Activated CD4-positive, alpha-beta memory T cell treated with anti-CD3 and anti-CD28 coated beads, Interleukin-2, amount 10 ng/mL, durations not matched to agents 7 days and 5 days (primary cell): ENCODE measurements at regions of chr9 and their contacts with region 1.

Region 1: GRCh38 chr9:111525056-111525977 is at the start of gene ZNF483:
- DNase-seq: peak; percentile 68
- H3K4me3 Mint-ChIP-seq: peak within 1 kb of the TSS; percentile 88
- H3K27ac Mint-ChIP-seq: peak within 1 kb of the TSS; percentile 73
- H3K4me1 Mint-ChIP-seq: peaks cover 30% of the 10 kb centered on the region
- H3K27me3 Mint-ChIP-seq: peaks cover 3% of the 10 kb centered on the region
- total RNA-seq, gene ZNF483: 5.9 to 6.0 TPM

Region 2: DNA sequence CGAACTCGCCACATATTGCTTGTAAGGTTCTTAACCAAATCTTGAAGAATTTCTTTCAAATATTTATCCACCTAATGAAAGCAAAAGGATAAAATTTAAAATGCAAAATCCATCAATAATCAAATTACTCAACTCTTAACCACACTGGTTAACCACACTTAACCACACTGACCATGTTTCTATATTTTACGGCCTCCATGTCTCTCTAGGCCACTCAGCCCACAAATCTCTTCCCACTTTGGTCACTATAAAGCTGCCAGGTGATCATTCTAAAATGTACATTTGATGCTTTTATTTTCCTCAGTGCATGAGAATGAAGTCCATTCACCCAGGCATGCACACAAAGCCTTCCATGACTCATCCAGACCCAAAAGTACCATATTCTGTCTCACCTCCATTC is 138.9 kb before region 1 on chr9:
- CTCF ChIA-PET with region 1: no interaction called
- POLR2A ChIA-PET with region 1: no interaction called
- DNase-seq: no peak
- H3K4me3 Mint-ChIP-seq: no peak overlapping the region
- H3K27ac Mint-ChIP-seq: no peak overlapping the region
- H3K4me1 Mint-ChIP-seq: no peaks in the 10 kb centered on the region
- H3K27me3 Mint-ChIP-seq: no peaks in the 10 kb centered on the region

Region 3: DNA sequence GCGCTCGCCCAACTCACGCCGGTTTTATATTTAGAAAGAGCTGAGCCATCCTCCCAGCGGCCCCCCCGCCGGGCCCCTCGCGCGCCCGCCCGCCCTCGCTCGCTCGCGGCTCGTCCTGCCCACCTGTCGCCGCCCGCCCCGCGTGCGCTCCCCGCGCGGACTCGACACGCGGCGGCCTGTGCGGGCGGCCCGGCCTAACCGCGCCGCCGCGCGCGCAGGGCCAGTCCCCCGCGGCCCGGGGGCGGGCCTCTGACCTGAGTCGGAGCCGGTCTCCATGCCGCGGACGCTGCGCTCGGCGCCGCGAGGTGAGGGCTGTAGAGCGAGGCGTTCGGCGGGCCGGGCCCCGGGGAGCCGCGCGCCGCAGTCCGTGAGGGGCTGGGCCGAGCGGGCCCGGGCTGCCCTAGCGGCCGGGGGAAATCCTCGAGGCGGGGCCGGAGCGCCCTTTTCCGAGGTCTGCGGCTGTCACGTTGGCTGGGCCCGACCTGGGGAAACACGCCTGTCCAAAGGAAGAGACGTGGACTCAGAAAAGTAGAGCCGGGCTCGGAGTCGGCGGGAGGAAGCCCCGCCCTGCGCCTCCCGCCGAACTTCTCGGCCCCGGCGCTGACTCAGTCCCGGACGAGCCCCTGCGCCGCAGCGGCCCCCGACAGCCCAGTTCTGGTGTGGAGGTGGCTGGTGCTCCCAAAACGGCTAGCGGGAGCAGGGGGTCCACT is 41.3 kb before region 1 on chr9 and contains the start of gene ECPAS:
- CTCF ChIA-PET with region 1: no interaction called
- POLR2A ChIA-PET with region 1: interaction called, 14 read pairs
- DNase-seq: peak; percentile 71
- H3K4me3 Mint-ChIP-seq: peak within 1 kb of the TSS; percentile 72
- H3K27ac Mint-ChIP-seq: peak within 1 kb of the TSS; percentile 70
- H3K4me1 Mint-ChIP-seq: peaks cover 27% of the 10 kb centered on the region
- H3K27me3 Mint-ChIP-seq: peaks cover 6% of the 10 kb centered on the region
- total RNA-seq, gene ECPAS: 66.0 to 68.1 TPM

Region 4: DNA sequence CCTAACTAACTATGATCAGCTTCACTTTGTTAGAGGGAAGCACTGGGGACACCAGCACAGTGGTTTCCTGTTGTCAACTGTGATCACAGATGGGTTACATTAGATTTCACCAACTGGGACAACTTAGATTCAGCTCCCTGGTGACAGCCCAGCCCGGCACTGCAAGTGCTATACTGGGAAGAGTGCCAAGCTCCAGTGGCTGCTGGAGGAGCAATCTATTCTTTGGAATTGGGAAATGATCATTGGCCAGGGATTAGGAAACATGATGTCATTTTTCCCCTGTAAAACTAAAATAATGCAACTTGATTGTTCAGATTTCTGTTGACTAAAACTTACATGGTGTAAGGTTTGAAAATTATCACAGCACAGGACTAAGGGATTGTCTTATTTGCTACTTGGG is 40.9 kb after region 1 on chr9:
- CTCF ChIA-PET with region 1: no interaction called
- POLR2A ChIA-PET with region 1: no interaction called
- DNase-seq: no peak
- H3K4me3 Mint-ChIP-seq: no peak overlapping the region
- H3K27ac Mint-ChIP-seq: no peak overlapping the region
- H3K4me1 Mint-ChIP-seq: no peaks in the 10 kb centered on the region
- H3K27me3 Mint-ChIP-seq: no peaks in the 10 kb centered on the region